Activated naive CD4-positive, alpha-beta T cell treated with anti-CD3 and anti-CD28 coated beads, Interleukin-2, amount 10 ng/mL, durations not matched to agents 7 days and 5 days (primary cell): ENCODE measurements at regions of chrX and their contacts with region 1.

Region 1: GRCh38 chrX:20437683-20438082 is 171.0 kb upstream of the RPS6KA3 start:
- DNase-seq: no peak
- H3K4me3 Mint-ChIP-seq: peak overlapping the region; percentile 39
- H3K27ac Mint-ChIP-seq: peak overlapping the region; percentile 97
- H3K4me1 Mint-ChIP-seq: peaks cover 77% of the 10 kb centered on the region
- H3K27me3 Mint-ChIP-seq: peaks cover 1% of the 10 kb centered on the region

Region 2: DNA sequence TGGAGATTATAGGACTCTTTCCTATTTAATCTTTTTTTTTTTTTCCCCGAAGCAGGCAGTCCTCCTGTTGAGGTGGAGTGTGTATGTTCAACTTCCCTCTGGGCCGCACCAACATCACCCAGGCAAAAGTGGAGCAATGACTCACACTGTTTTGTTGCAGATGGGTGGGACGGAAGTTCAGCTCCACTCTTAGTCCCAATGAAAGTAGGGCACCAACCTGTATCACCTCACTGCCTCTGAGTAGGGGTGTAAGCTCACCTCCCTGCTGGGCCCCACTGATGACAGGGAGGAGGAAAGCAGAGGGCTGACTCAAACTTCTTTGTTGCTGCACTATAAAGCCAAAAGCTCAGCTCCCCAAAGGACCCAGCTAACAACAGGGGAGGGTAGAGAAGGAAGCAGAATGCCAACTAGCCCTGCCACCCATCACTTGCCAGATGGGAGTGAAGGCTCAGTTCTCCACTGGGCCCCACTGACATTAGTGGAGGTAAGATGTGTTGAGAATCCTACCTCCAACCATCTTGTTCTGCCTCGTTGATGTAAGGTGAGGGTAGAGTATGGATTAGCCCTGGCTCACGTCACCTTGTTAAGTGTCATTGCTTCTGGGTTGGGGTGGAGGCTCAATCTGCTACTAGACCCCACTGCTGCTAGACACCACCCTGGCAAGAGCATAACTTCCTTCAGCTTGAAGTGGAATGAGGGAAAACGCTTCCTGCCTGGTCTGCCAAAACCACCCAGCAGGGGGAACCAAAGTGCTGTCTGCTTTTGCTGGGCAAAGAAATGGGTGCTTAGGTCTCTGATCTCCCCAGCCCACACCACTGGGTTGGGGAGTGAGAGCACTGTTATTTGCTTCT is 185.1 kb before region 1 on chrX:
- CTCF ChIA-PET with region 1: interaction called, 22 read pairs
- DNase-seq: peak; percentile 78
- H3K4me3 Mint-ChIP-seq: no peak overlapping the region
- H3K27ac Mint-ChIP-seq: peak overlapping the region; percentile 81
- H3K4me1 Mint-ChIP-seq: peaks cover 44% of the 10 kb centered on the region
- H3K27me3 Mint-ChIP-seq: no peaks in the 10 kb centered on the region

Region 3: GRCh38 chrX:20461576-20461975 is 23.9 kb after region 1 on chrX:
- CTCF ChIA-PET with region 1: no interaction called
- DNase-seq: no peak
- H3K4me3 Mint-ChIP-seq: no peak overlapping the region
- H3K27ac Mint-ChIP-seq: no peak overlapping the region
- H3K4me1 Mint-ChIP-seq: peaks cover 22% of the 10 kb centered on the region
- H3K27me3 Mint-ChIP-seq: peaks cover 3% of the 10 kb centered on the region